ENCODE measurements at regions of chr2 and their contacts with region 1.

Region 1: DNA sequence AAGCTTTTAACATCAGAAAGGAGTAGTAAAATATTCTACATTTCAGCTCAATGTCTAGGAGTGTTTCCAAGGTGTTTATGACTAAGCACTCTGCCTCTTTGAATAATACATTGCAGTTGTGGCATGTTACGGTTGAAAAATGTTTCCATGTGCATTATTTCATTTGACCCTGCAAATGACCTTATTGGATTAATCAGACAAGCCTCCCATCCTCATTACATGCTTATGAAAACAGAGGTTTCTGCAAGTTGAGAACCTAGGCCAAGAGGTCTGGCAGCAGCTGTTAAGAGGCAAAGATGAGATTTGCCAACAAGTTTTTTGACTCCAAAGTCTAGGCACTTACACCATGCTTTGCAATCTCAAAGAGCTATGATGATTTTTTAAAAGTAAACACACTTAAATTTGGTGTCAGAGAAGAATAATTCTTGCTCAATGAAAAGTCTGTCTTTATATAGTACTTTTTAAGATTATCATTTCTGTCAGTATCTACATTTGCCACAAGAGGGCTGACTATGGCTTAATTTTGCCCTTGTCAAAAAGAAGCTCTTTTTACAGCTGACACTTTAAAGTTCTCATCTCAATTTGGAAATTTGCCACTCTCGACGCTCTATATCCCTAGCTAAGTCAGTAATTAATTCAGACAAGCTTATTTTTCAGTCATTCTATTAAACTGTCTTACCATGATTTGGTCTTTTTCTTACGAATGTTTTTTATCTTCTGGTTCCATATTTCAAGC is 260.6 kb downstream of the PAX3 start:
- H3K4me3 ChIP-seq: no peak overlapping the region
- H3K27ac ChIP-seq: no peak overlapping the region
- H3K4me1 ChIP-seq: peaks cover 4% of the 10 kb centered on the region
- CTCF ChIP-seq: no peak

Region 2: GRCh38 chr2:221153226-221153625 is 885.0 kb before region 1 on chr2:
- CTCF ChIA-PET with region 1: no interaction called
- POLR2A ChIA-PET with region 1: no interaction called
- H3K4me3 ChIP-seq: no peak overlapping the region
- H3K27ac ChIP-seq: no peak overlapping the region
- H3K4me1 ChIP-seq: no peaks in the 10 kb centered on the region; the same call in 1 of the 2 replicates
- CTCF ChIP-seq: no peak

Region 3: GRCh38 chr2:222057347-222058073 is 19.3 kb after region 1 on chr2:
- CTCF ChIA-PET with region 1: interaction called, 27 read pairs
- POLR2A ChIA-PET with region 1: no interaction called
- H3K4me3 ChIP-seq: no peak overlapping the region
- H3K27ac ChIP-seq: no peak overlapping the region
- H3K4me1 ChIP-seq: peaks cover 6% of the 10 kb centered on the region; the same call in 1 of the 2 replicates
- CTCF ChIP-seq: peak; percentile 79; the same call in 1 of the 2 replicates

Region 4: GRCh38 chr2:222203041-222203440 is 164.8 kb after region 1 on chr2:
- CTCF ChIA-PET with region 1: no interaction called
- POLR2A ChIA-PET with region 1: no interaction called
- H3K4me3 ChIP-seq: no peak overlapping the region
- H3K27ac ChIP-seq: no peak overlapping the region; the same call in 1 of the 2 replicates
- H3K4me1 ChIP-seq: peaks cover 18% of the 10 kb centered on the region
- CTCF ChIP-seq: no peak

Region 5: DNA sequence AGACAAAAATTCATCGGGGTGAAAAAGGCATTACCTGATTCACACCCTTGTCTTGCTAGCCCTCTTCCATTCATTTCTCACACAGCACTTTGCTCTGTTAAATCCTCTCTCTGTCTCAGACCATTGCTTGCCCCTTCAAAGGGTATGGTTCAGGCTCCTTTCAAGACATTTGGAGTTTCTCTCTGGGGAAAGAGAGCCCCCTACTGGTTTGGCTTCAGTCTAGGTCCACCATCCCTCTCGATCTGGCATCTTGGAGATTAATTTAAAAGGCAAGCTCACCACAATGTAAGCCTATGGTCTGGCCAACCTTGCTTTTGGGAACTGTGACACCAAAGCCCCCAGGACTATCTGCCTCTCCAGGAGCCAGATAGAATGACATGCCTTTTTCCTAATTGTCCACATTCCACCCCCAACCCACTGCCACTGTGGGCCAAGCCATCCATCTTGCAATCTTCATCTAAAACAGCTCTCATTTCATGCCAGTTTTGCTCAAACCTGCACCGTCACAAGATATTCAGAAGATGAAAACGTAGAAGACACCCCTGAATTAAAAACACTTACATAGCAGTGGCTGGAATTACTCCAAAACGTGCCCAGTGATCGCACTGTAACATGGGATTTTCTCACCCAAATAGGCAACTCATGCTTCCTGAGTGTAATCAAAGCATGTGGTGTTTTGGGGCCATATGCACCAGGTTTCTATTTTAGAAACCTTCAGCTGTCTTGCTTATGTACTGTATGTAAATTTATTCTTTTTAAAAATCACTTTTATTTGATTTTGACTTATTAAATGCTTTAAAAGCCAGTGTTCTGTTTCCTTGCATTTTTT is 523.8 kb after region 1 on chr2:
- CTCF ChIA-PET with region 1: interaction called, 17 read pairs
- POLR2A ChIA-PET with region 1: no interaction called
- H3K4me3 ChIP-seq: no peak overlapping the region
- H3K27ac ChIP-seq: no peak overlapping the region
- H3K4me1 ChIP-seq: no peaks in the 10 kb centered on the region
- CTCF ChIP-seq: no peak

Region 6: DNA sequence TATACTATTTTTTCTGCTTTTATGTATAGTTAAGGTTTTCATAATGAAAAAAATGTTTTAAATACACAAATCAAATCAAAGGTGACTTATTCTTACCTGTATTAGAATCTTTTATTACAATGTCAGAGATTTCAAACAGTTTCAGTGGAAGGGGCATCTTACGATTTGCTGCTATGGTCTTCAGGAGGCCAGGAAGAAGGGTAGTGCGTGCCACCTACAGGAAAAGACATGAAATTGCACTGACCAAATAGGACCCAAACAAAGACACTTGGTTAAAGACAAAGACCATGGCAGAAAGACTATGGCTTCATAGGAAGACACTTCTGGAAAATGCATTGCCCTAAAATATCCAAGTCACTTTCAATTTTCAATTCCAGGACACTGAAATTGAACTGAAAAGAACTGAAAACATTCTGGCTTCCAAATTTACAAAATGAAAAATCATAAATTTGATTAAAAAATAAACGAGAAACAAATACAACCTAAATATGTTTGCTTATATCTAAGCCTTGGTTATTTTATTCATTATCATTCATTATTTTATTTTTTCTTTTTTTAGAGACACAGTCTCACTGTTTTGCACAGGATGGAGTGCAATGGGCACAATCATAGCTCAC is 575.6 kb after region 1 on chr2:
- CTCF ChIA-PET with region 1: interaction called, 16 read pairs
- POLR2A ChIA-PET with region 1: no interaction called
- H3K4me3 ChIP-seq: no peak overlapping the region
- H3K27ac ChIP-seq: no peak overlapping the region
- H3K4me1 ChIP-seq: no peaks in the 10 kb centered on the region
- CTCF ChIP-seq: 0 out of 2 replicates have a peak, but pooled peaks have one; percentile 26